ENCODE measurements at regions of chrX and their contacts with region 1.

Region 1: GRCh38 chrX:45769761-45770582 is 569.3 kb upstream of the DIPK2B start:
- DNase-seq: peak; percentile 87
- H3K4me3 ChIP-seq: peak overlapping the region; percentile 55 to 100 (median 94)
- H3K27ac ChIP-seq: peak overlapping the region; percentile 87
- H3K4me1 ChIP-seq: peaks cover 40% of the 10 kb centered on the region
- H3K27me3 ChIP-seq: no peaks in the 10 kb centered on the region
- CTCF ChIP-seq: no peak
- POLR2A ChIP-seq: peak; percentile 70

Region 2: DNA sequence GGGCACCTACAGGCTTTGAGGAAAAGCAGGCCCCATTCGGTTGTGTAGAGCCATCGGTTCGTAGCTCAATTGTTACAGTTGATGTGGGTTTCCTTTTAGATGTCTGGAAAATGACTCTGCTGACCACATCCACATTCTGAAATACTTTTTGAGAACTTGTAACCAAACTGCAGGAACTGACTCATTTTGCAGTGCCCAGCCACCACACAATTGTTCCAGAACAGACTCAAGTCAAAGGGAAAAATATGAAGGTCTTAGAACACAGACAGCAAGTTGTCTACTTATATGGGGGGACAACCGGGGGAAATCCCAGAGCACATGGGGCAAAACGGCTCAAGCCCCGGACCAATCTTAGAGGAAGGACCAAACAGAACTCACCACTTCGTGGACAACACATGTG is 11.7 kb before region 1 on chrX:
- CTCF ChIA-PET with region 1: interaction called, 12 read pairs
- POLR2A ChIA-PET with region 1: interaction called, 14 read pairs
- dilution Hi-C with region 1: no loop called
- intact Hi-C with region 1: loop called (anchors 1 kb)
- DNase-seq: peak; percentile 86
- H3K4me3 ChIP-seq: peak overlapping the region in 1 of 3 experiments; percentile 23
- H3K27ac ChIP-seq: peak overlapping the region; percentile 94
- H3K4me1 ChIP-seq: peaks cover 90% of the 10 kb centered on the region
- H3K27me3 ChIP-seq: no peaks in the 10 kb centered on the region
- CTCF ChIP-seq: no peak
- POLR2A ChIP-seq: no peak

Region 3: GRCh38 chrX:45788941-45789348 is 19.0 kb after region 1 on chrX:
- CTCF ChIA-PET with region 1: interaction called, 4 read pairs
- POLR2A ChIA-PET with region 1: interaction called, 12 read pairs
- dilution Hi-C with region 1: no loop called
- intact Hi-C with region 1: loop called (anchors 1 kb)
- DNase-seq: peak; percentile 79
- H3K4me3 ChIP-seq: peak overlapping the region in 1 of 3 experiments; percentile 14
- H3K27ac ChIP-seq: peak overlapping the region; percentile 78
- H3K4me1 ChIP-seq: peaks cover 28% of the 10 kb centered on the region
- H3K27me3 ChIP-seq: no peaks in the 10 kb centered on the region
- CTCF ChIP-seq: no peak
- POLR2A ChIP-seq: peak; percentile 33

Region 4: DNA sequence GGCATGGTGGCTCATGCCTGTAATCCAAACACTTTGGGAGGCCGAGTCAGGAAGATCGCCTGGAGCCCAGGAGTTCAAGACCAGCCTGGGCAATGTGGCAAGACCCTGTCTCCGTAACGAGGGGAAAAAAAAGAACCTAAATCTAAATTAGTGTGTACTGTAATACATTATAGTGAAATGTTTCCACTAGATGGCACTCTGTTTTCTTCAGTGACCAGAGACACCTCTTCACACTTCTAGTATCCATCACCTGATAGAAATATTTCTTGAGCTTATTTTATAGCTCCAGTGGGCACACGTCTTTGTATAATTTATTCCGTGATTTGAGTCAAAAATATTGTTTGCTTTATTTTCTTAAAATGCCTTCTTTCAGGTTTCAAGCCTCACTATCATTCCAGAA is 31.6 kb after region 1 on chrX:
- CTCF ChIA-PET with region 1: interaction called, 12 read pairs
- POLR2A ChIA-PET with region 1: interaction called, 6 read pairs
- dilution Hi-C with region 1: no loop called
- intact Hi-C with region 1: loop called (anchors 1 kb)
- DNase-seq: peak; percentile 43
- H3K4me3 ChIP-seq: no peak overlapping the region
- H3K27ac ChIP-seq: peak overlapping the region; percentile 36
- H3K4me1 ChIP-seq: peaks cover 31% of the 10 kb centered on the region
- H3K27me3 ChIP-seq: no peaks in the 10 kb centered on the region
- CTCF ChIP-seq: peak in 1 of 2 donors; percentile 9
- POLR2A ChIP-seq: no peak

Region 5: GRCh38 chrX:46325312-46325877 is 555.4 kb after region 1 on chrX:
- CTCF ChIA-PET with region 1: no interaction called
- POLR2A ChIA-PET with region 1: no interaction called
- dilution Hi-C with region 1: no loop called
- intact Hi-C with region 1: loop called (anchors 5 kb)
- DNase-seq: peak; percentile 69
- H3K4me3 ChIP-seq: no peak overlapping the region
- H3K27ac ChIP-seq: peak overlapping the region; percentile 98
- H3K4me1 ChIP-seq: peaks cover 36% of the 10 kb centered on the region
- H3K27me3 ChIP-seq: no peaks in the 10 kb centered on the region
- CTCF ChIP-seq: no peak
- POLR2A ChIP-seq: no peak